ENCODE measurements at regions of chr5 and their contacts with region 1.

Region 1: GRCh38 chr5:157464519-157465171 is 4.6 kb downstream of the NIPAL4 start:
- DNase-seq: no peak
- ATAC-seq: peak in 4 of 8 donors; percentile 38 to 78 (median 59)
- H3K4me3 ChIP-seq: no peak overlapping the region
- H3K27ac ChIP-seq: peak overlapping the region in 1 of 10 donors; percentile 42
- H3K4me1 ChIP-seq: peaks cover 4 to 26% (median 10%) of the 10 kb centered on the region in 9 donors
- H3K27me3 ChIP-seq: peaks cover 0 to 28% (median 21%) of the 10 kb centered on the region in 7 donors
- CTCF ChIP-seq: no peak

Region 2: DNA sequence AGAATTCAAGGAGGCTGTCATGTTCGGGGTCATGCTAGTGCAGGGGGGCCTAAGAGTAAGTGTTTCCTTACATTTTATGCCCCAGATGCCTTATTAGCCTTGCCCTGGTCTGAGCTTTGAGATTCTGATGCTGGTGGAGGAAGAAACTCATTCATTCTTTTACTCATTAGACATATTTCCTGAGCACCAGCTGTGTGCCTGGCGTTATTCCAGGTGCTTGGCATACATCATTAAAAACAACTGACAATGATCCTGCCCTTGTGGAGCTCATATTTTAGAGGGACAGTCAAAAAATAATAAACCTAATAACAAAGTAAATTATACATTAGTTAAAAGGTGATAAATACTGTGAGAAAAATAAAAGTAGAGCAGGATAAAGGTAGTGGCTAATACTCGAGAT is 1276.6 kb before region 1 on chr5:
- intact Hi-C with region 1: loop called in 1 of 10 experiments (anchors 5 kb)
- DNase-seq: no peak
- ATAC-seq: no peak
- H3K4me3 ChIP-seq: no peak overlapping the region
- H3K27ac ChIP-seq: no peak overlapping the region
- H3K4me1 ChIP-seq: peaks cover 0 to 7% (median 0%) of the 10 kb centered on the region in 9 donors
- H3K27me3 ChIP-seq: no peaks in the 10 kb centered on the region
- CTCF ChIP-seq: no peak

Region 3: GRCh38 chr5:156942064-156942463 is 522.6 kb before region 1 on chr5:
- intact Hi-C with region 1: no loop called
- DNase-seq: no peak
- ATAC-seq: no peak
- H3K4me3 ChIP-seq: no peak overlapping the region
- H3K27ac ChIP-seq: no peak overlapping the region
- H3K4me1 ChIP-seq: no peaks in the 10 kb centered on the region
- H3K27me3 ChIP-seq: no peaks in the 10 kb centered on the region
- CTCF ChIP-seq: no peak

Region 4: DNA sequence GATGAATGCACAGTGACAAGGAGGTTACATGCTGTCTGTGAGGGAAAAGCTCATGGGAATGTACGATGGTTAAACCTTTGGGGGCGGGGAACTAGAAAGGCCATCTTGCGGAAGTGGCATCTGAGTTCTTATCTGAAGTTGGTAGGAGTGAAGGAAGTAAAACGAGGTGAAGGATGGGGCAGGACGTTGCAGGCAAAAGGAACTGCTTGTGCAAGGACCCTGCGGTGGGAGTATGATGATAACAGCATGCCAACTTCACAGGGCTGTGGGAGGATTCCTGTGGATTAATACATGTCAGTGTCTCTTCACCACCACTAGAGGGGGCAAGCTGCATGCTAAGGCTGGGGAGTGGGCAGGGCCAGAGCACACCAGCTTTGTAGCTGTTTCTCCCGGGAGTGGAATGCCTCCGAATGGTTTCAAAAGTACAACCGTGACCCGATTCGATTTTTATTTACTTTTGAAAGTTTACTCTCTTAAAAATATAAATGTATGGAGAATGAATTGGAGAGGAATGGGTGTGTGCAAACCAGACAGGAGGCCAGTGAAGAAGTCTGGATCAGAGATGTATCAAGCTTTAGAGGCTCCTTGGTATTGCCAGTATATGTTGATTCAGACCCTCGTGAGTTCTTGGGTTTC is 136.2 kb before region 1 on chr5:
- intact Hi-C with region 1: no loop called
- DNase-seq: peak; percentile 32 to 61
- ATAC-seq: peak; percentile 89 to 96 (median 94)
- H3K4me3 ChIP-seq: peak overlapping the region in 6 of 10 donors; percentile 8 to 37 (median 22)
- H3K27ac ChIP-seq: peak overlapping the region in 1 of 10 donors; percentile 36
- H3K4me1 ChIP-seq: peaks cover 0 to 11% (median 0%) of the 10 kb centered on the region in 9 donors
- H3K27me3 ChIP-seq: no peaks in the 10 kb centered on the region
- CTCF ChIP-seq: peak; percentile 87 to 95 (median 93)

Region 5: DNA sequence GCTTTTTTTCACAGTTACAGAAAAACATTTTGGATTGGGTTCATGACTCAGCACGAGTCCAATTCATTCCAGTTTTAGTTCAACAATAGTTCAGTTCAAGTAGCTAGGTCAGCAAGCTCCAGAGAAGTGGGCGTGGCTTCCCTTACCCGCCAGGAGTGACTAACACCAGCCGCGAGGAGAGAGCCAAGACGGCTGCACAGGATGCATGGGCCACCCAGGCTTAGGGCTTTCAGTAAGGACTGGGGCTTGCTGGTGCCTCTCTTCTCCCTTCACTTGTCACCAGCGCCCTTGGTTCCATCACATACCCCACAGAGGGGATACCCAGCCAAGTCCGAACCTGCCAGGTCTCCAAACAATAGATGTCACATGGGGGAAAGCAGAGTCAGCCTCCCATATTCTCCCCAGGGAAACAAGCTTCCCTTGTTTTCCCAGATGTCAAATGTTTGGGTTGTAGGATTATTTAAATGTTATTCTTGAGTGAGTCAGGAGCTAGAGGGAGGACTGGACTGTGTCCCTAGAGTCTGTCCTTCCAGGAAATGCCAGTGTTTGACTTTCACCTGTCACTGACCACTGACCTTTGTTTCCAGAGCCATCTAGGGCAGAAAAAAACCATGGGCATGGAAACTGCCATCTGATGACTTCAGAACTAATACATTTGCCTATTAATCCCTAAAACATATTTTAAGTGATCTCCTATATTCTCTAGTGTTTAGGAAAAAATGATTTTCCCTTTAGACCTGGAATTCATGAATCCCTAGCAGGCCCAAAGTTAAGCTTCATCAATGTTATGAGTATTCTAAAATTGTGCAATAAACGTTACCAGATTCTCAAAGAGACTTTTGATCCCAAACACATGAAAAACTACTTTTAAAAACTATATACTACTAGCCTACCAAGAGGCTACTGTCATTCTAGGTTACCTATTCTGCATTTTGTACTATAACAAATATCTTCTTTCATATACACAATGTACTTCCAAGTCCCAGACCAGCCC is 47.3 kb after region 1 on chr5:
- intact Hi-C with region 1: no loop called
- DNase-seq: peak; percentile 86 to 95
- ATAC-seq: peak; percentile 88 to 97 (median 94)
- H3K4me3 ChIP-seq: no peak overlapping the region
- H3K27ac ChIP-seq: peak overlapping the region in 9 of 10 donors; percentile 50 to 85 (median 76)
- H3K4me1 ChIP-seq: peaks cover 8 to 69% (median 51%) of the 10 kb centered on the region in 9 donors
- H3K27me3 ChIP-seq: no peaks in the 10 kb centered on the region
- CTCF ChIP-seq: no peak